H1 (cell line): ENCODE measurements at regions of chr14 and their contacts with region 1.

Region 1: GRCh38 chr14:91177073-91178034 is 63.5 kb downstream of the DGLUCY start:
- DNase-seq: peak in 1 of 2 experiments; percentile 66
- H3K4me3 ChIP-seq: no peak overlapping the region
- H3K27ac ChIP-seq: no peak overlapping the region
- H3K4me1 ChIP-seq: no peaks in the 10 kb centered on the region; a peak in 2 of 7 replicates
- H3K27me3 ChIP-seq: no peaks in the 10 kb centered on the region
- CTCF ChIP-seq: peak in 2 of 3 experiments; percentile 63 to 72; a peak in 3 of 4 replicates
- EP300 ChIP-seq: no peak
- POLR2A ChIP-seq: no peak
- RAD21 ChIP-seq: peak; percentile 71 to 81

Region 2: DNA sequence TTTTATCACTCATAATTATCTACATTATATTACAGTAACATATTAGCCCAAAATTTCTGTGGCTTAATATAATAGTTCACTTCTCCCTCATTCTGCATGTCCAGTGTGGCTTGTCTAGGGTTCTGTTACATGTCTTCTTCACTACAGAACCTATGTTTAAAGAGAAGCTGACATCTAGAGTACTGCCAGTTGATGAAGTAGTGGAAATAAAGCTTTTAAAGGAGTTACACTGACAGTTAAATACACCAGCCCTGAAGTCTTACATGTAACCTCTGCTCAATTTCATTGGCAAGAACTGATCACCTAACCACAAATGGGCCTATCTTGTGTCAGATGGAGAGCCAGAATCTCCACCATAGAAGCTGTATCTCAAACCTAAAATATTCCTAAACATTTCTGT is 149.8 kb before region 1 on chr14:
- CTCF ChIA-PET with region 1: no interaction called
- POLR2A ChIA-PET with region 1: no interaction called
- DNase-seq: no peak
- H3K4me3 ChIP-seq: no peak overlapping the region
- H3K27ac ChIP-seq: no peak overlapping the region
- H3K4me1 ChIP-seq: peaks cover 0 to 4% (median 0%) of the 10 kb centered on the region in 4 experiments; a peak in 1 of 7 replicates
- H3K27me3 ChIP-seq: no peaks in the 10 kb centered on the region
- CTCF ChIP-seq: no peak
- EP300 ChIP-seq: no peak
- POLR2A ChIP-seq: no peak
- RAD21 ChIP-seq: no peak

Region 3: GRCh38 chr14:91088585-91089235 is 88.6 kb before region 1 on chr14:
- CTCF ChIA-PET with region 1: no interaction called
- POLR2A ChIA-PET with region 1: no interaction called
- DNase-seq: no peak
- H3K4me3 ChIP-seq: no peak overlapping the region
- H3K27ac ChIP-seq: no peak overlapping the region
- H3K4me1 ChIP-seq: no peaks in the 10 kb centered on the region
- H3K27me3 ChIP-seq: no peaks in the 10 kb centered on the region
- CTCF ChIP-seq: no peak
- EP300 ChIP-seq: no peak
- POLR2A ChIP-seq: no peak
- RAD21 ChIP-seq: no peak

Region 4: GRCh38 chr14:91138511-91139359 is 38.6 kb before region 1 on chr14:
- CTCF ChIA-PET with region 1: interaction called, 26 read pairs
- POLR2A ChIA-PET with region 1: interaction called, 4 read pairs
- DNase-seq: peak in 1 of 2 experiments; percentile 66
- H3K4me3 ChIP-seq: no peak overlapping the region
- H3K27ac ChIP-seq: no peak overlapping the region
- H3K4me1 ChIP-seq: peaks cover 0 to 5% (median 3%) of the 10 kb centered on the region in 4 experiments; a peak in 4 of 7 replicates
- H3K27me3 ChIP-seq: no peaks in the 10 kb centered on the region
- CTCF ChIP-seq: peak; percentile 3 to 76 (median 59)
- EP300 ChIP-seq: no peak
- POLR2A ChIP-seq: no peak
- RAD21 ChIP-seq: peak; percentile 35 to 53; a peak in 3 of 4 replicates

Region 5: GRCh38 chr14:91164685-91165084 is 12.7 kb before region 1 on chr14:
- CTCF ChIA-PET with region 1: interaction called, 43 read pairs
- POLR2A ChIA-PET with region 1: no interaction called
- DNase-seq: no peak
- H3K4me3 ChIP-seq: no peak overlapping the region
- H3K27ac ChIP-seq: no peak overlapping the region
- H3K4me1 ChIP-seq: no peaks in the 10 kb centered on the region
- H3K27me3 ChIP-seq: no peaks in the 10 kb centered on the region
- CTCF ChIP-seq: no peak
- EP300 ChIP-seq: no peak
- POLR2A ChIP-seq: no peak
- RAD21 ChIP-seq: no peak

Region 6: DNA sequence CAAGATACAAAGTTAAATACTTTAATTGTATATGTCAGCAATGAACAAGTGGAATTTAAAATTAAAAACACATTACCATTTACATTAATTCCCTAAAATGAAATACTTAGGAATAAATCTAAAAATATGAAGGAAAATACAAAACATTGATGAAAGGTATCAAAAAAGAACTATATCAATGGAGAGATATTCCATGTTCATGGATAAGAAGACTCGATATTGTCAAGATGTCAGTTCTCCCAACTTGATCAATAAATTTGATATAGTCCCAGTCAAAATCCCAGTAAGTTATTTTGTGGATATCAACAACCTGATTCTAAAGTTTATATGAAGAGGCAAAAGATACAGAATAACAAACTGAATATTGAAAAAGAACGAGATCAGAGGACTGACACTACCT is 33.7 kb after region 1 on chr14:
- CTCF ChIA-PET with region 1: interaction called, 11 read pairs
- POLR2A ChIA-PET with region 1: no interaction called
- DNase-seq: no peak
- H3K4me3 ChIP-seq: no peak overlapping the region
- H3K27ac ChIP-seq: no peak overlapping the region
- H3K4me1 ChIP-seq: no peaks in the 10 kb centered on the region
- H3K27me3 ChIP-seq: no peaks in the 10 kb centered on the region
- CTCF ChIP-seq: no peak
- EP300 ChIP-seq: no peak
- POLR2A ChIP-seq: no peak
- RAD21 ChIP-seq: no peak

Region 7: DNA sequence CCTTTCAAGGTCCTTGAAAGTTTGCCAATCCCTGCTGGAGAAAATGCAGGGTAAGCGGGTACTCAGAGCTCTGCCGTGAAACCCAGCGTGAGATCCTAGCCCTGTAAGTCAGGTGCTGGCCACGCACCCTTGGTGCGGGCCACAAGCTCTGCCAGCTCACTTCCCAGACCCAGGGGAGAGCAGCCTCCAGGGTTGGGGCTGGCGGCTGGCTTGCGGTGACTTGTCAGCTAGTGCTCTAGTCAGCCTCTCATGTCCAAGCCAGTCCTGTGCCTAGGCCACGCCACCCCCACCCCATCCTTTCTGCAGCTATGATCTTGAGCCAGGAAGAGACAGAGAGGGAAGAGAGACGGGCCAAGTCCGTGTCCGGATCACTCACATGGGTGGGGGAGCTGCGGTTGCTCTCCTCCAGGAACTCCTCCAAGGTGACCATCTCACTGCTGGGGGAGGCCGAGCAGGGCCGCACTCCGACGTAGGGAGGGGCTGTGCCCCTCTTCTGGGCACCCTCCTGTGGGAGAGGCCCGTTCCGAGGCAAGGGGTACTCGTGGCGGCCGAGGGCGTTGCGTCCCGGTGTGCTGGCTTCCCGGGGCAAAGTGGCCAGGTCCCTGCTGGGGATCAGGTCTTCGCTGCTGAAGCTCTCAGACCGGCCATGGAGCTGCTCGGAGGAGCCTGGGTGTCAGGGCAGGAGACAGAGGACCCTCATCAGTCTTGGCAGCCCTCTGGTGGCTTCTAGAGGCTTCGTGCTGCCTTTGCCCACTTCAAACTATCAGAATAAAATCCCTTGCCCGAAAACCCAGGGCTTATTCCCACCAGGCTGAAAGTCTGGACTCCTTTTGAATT is 100.4 kb after region 1 on chr14:
- CTCF ChIA-PET with region 1: interaction called, 57 read pairs
- POLR2A ChIA-PET with region 1: no interaction called
- DNase-seq: no peak
- H3K4me3 ChIP-seq: no peak overlapping the region
- H3K27ac ChIP-seq: no peak overlapping the region
- H3K4me1 ChIP-seq: no peaks in the 10 kb centered on the region
- H3K27me3 ChIP-seq: no peaks in the 10 kb centered on the region
- CTCF ChIP-seq: no peak
- EP300 ChIP-seq: no peak
- POLR2A ChIP-seq: no peak
- RAD21 ChIP-seq: peak in 1 of 2 experiments; percentile 11; a peak in 1 of 4 replicates

Region 8: GRCh38 chr14:91363776-91364523 is 186.6 kb after region 1 on chr14:
- CTCF ChIA-PET with region 1: no interaction called
- POLR2A ChIA-PET with region 1: no interaction called
- DNase-seq: no peak
- H3K4me3 ChIP-seq: no peak overlapping the region
- H3K27ac ChIP-seq: peak overlapping the region; percentile 8; the same call in 1 of the 2 replicates
- H3K4me1 ChIP-seq: peaks cover 6 to 16% (median 11%) of the 10 kb centered on the region in 4 experiments
- H3K27me3 ChIP-seq: no peaks in the 10 kb centered on the region
- CTCF ChIP-seq: no peak
- EP300 ChIP-seq: no peak
- POLR2A ChIP-seq: no peak
- RAD21 ChIP-seq: no peak; a peak in 1 of 4 replicates